ENCODE measurements at regions of chr3 and their contacts with region 1.

Region 1: GRCh38 chr3:186783073-186783730 is at the start of gene EIF4A2:
- DNase-seq: peak; percentile 91
- H3K4me3 Mint-ChIP-seq: peak within 1 kb of the TSS; percentile 99
- H3K27ac Mint-ChIP-seq: peak within 1 kb of the TSS; percentile 100
- H3K4me1 Mint-ChIP-seq: peaks cover 40% of the 10 kb centered on the region
- H3K27me3 Mint-ChIP-seq: no peaks in the 10 kb centered on the region
- total RNA-seq, gene EIF4A2: 385 to 388 TPM

Region 2: GRCh38 chr3:185937689-185938463 is 845.3 kb before region 1 on chr3 and contains the start of gene TRA2B:
- CTCF ChIA-PET with region 1: no interaction called
- POLR2A ChIA-PET with region 1: interaction called, 88 read pairs
- DNase-seq: peak; percentile 99
- H3K4me3 Mint-ChIP-seq: peak within 1 kb of the TSS; percentile 98
- H3K27ac Mint-ChIP-seq: peak within 1 kb of the TSS; percentile 100
- H3K4me1 Mint-ChIP-seq: peaks cover 28% of the 10 kb centered on the region
- H3K27me3 Mint-ChIP-seq: peaks cover 6% of the 10 kb centered on the region
- total RNA-seq, gene TRA2B: 194 to 195 TPM

Region 3: DNA sequence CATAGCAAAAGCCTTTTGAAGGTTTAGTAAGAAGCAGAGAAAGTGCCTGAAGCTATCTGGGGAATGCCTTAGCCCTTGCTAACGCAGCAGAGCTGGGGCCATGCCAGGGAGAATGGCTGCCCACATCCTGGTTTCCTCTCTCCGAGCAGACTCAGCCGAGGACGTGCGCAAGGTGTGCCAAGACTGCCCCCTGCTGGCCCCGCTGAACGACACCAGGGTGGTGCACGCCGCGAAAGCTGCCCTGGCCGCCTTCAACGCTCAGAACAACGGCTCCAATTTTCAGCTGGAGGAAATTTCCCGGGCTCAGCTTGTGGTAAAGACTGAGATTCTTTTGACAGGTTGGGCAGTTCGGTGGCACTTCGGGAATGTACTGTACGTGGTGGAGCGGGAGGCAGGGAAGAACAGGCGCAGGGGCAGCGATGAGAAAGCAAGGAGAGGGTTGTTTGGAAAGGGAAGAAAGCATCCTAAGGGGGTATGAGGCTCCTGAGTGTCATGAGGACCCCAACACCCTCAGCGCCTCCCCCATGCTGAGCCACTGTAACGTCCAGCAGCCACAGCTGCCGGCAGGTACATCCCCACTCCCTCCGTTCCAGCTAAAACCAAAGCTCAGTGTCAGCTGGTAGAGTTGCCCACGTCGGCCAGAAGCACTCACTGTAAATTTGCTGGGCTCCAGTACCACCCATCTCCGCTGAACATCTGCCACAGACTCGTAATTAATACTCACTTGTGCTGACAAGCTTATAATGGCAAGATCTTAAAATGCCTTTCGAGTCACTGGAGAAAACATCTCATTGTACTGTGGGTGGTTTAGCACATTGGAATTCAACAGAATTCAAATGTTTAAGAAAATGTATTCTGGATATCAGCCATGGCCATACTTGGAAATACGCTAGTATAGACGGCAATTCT is 165.9 kb before region 1 on chr3:
- CTCF ChIA-PET with region 1: interaction called, 7 read pairs
- POLR2A ChIA-PET with region 1: interaction called, 16 read pairs
- DNase-seq: peak; percentile 87
- H3K4me3 Mint-ChIP-seq: peak overlapping the region; percentile 9
- H3K27ac Mint-ChIP-seq: no peak overlapping the region
- H3K4me1 Mint-ChIP-seq: peaks cover 24% of the 10 kb centered on the region
- H3K27me3 Mint-ChIP-seq: peaks cover 41% of the 10 kb centered on the region

Region 4: GRCh38 chr3:186679151-186679550 is 104.1 kb before region 1 on chr3:
- CTCF ChIA-PET with region 1: no interaction called
- POLR2A ChIA-PET with region 1: no interaction called
- DNase-seq: no peak
- H3K4me3 Mint-ChIP-seq: no peak overlapping the region
- H3K27ac Mint-ChIP-seq: no peak overlapping the region
- H3K4me1 Mint-ChIP-seq: no peaks in the 10 kb centered on the region
- H3K27me3 Mint-ChIP-seq: peaks cover 50% of the 10 kb centered on the region

Region 5: GRCh38 chr3:186806089-186807055 is 23.2 kb after region 1 on chr3 and contains the start of gene RFC4:
- CTCF ChIA-PET with region 1: no interaction called
- POLR2A ChIA-PET with region 1: interaction called, 232 read pairs
- DNase-seq: peak; percentile 87
- H3K4me3 Mint-ChIP-seq: peak within 1 kb of the TSS; percentile 97
- H3K27ac Mint-ChIP-seq: peak within 1 kb of the TSS; percentile 94
- H3K4me1 Mint-ChIP-seq: peaks cover 45% of the 10 kb centered on the region
- H3K27me3 Mint-ChIP-seq: no peaks in the 10 kb centered on the region
- total RNA-seq, gene RFC4: 85.5 to 89.3 TPM

Region 6: DNA sequence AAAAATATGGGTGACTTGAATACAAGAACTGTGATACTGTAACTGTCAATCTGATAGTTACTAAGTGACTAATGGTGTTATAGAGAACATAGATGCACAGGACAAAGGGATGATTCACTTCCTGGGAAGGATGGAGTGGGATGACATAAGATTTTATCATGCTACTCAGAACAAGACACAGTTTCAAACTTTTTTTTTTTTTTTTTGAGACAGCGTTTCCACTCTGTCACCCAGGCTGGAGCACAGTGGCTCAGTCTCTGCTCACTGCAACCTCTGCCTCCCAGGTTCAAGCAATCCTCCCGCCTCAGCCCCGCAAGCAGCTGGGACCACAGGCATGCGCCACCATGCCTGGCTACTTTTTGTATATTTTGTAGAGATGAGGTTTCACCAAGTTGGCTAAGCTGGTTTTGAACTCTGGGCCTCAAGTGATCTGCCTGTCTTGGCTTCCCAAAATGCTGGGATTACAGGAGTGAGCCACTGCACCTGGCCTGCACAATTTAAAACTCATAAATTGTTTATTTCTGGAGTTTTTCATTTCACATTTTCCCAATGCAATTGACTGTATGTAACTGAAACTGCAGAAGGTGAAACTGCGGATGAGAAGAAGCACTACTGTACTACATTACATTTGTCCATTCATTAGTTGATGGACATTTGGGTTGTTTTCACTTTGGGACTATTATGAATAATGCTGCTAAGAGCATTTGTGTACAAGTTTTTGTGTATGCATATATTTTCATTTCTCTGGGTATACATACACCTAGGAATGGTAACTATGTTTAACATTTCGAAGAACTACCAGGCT is 99.9 kb after region 1 on chr3:
- CTCF ChIA-PET with region 1: no interaction called
- POLR2A ChIA-PET with region 1: interaction called, 19 read pairs
- DNase-seq: peak; percentile 60
- H3K4me3 Mint-ChIP-seq: peak overlapping the region; percentile 33
- H3K27ac Mint-ChIP-seq: peak overlapping the region; percentile 85
- H3K4me1 Mint-ChIP-seq: peaks cover 52% of the 10 kb centered on the region
- H3K27me3 Mint-ChIP-seq: no peaks in the 10 kb centered on the region

Region 7: GRCh38 chr3:187031934-187032333 is 248.7 kb after region 1 on chr3:
- CTCF ChIA-PET with region 1: no interaction called
- POLR2A ChIA-PET with region 1: interaction called, 40 read pairs
- DNase-seq: no peak
- H3K4me3 Mint-ChIP-seq: peak overlapping the region; percentile 3
- H3K27ac Mint-ChIP-seq: peak overlapping the region; percentile 68
- H3K4me1 Mint-ChIP-seq: peaks cover 63% of the 10 kb centered on the region
- H3K27me3 Mint-ChIP-seq: no peaks in the 10 kb centered on the region

Measured in activated CD4-positive, alpha-beta memory T cell treated with anti-CD3 and anti-CD28 coated beads, Interleukin-2, amount 10 ng/mL, durations not matched to agents 7 days and 5 days (primary cell).